B cell (primary cell): ENCODE measurements at regions of chr15 and their contacts with region 1.

Region 1: GRCh38 chr15:40440743-40441564 is at the start of gene BAHD1:
- DNase-seq: peak; percentile 94
- ATAC-seq: peak; percentile 90
- H3K4me3 ChIP-seq: peak within 1 kb of the TSS; percentile 15 to 80 (median 59)
- H3K4me3 Mint-ChIP-seq: peak within 1 kb of the TSS; percentile 91
- H3K27ac ChIP-seq: peak within 1 kb of the TSS in 1 of 2 donors; percentile 48
- H3K27ac Mint-ChIP-seq: peak within 1 kb of the TSS; percentile 89
- H3K4me1 ChIP-seq: peaks cover 37 to 44% of the 10 kb centered on the region in 2 donors
- H3K4me1 Mint-ChIP-seq: peaks cover 61% of the 10 kb centered on the region
- H3K27me3 ChIP-seq: peaks cover 0 to 35% (median 15%) of the 10 kb centered on the region in 4 experiments
- H3K27me3 Mint-ChIP-seq: peaks cover 25% of the 10 kb centered on the region
- CTCF ChIP-seq: no peak
- total RNA-seq, gene BAHD1: 34.7 and 34.8 TPM in 2 replicates

Region 2: DNA sequence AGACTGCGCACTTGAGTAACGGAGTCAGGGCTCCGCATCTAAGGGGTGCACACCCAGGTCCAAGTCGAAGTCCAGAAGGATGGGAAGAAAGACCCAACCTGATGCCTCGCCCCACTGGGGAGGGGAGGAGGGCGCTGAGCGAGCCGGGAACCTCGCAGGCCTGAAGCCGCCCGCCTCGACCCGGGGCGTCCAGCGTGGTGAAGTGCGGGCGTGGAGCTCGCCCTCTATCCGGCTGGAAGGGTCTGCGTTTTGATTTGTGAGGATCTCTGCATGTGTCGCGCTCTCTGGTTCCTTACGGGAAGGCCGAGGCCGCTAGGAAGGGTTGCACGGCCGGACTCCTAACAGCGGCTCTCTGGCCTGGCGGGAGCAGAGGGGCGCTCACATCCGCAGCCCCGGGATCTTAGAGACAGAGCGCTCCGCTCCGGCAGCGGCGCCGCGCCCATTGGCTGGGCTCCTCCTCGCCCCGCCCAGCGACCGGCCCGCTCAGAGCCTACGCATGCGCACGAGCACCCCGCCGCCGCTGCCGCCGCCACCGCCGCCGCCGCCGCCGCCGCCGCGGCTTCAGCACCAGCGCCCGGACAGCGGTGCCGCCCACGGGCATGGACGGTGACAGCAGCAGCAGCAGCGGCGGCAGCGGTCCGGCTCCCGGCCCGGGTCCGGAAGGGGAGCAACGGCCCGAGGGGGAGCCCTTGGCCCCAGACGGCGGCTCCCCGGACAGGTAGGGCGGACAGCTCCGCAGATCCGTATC is 83.1 kb before region 1 on chr15 and contains the start of gene DISP2:
- CTCF ChIA-PET with region 1: no interaction called
- POLR2A ChIA-PET with region 1: interaction called, 7 read pairs
- intact Hi-C with region 1: loop called (anchors 1 kb)
- DNase-seq: peak; percentile 95
- ATAC-seq: peak; percentile 93
- H3K4me3 ChIP-seq: peak within 1 kb of the TSS in 4 of 5 experiments; percentile 48 to 78 (median 58)
- H3K4me3 Mint-ChIP-seq: peak within 1 kb of the TSS; percentile 88
- H3K27ac ChIP-seq: no peak within 1 kb of the TSS
- H3K27ac Mint-ChIP-seq: peak within 1 kb of the TSS; percentile 59
- H3K4me1 ChIP-seq: peaks cover 6 to 11% of the 10 kb centered on the region in 2 donors
- H3K4me1 Mint-ChIP-seq: peaks cover 12% of the 10 kb centered on the region
- H3K27me3 ChIP-seq: peaks cover 0 to 6% (median 0%) of the 10 kb centered on the region in 4 experiments
- H3K27me3 Mint-ChIP-seq: peaks cover 8% of the 10 kb centered on the region
- CTCF ChIP-seq: no peak
- total RNA-seq, gene DISP2: 0.15 and 0.71 TPM in 2 replicates

Region 3: GRCh38 chr15:40382580-40383456 is 58.1 kb before region 1 on chr15 and contains the start of gene KNSTRN:
- CTCF ChIA-PET with region 1: no interaction called
- POLR2A ChIA-PET with region 1: no interaction called
- intact Hi-C with region 1: loop called (anchors 1 kb)
- DNase-seq: peak; percentile 93
- ATAC-seq: peak; percentile 100
- H3K4me3 ChIP-seq: peak within 1 kb of the TSS; percentile 53 to 89 (median 84)
- H3K4me3 Mint-ChIP-seq: peak within 1 kb of the TSS; percentile 98
- H3K27ac ChIP-seq: peak within 1 kb of the TSS in 1 of 2 donors; percentile 40
- H3K27ac Mint-ChIP-seq: peak within 1 kb of the TSS; percentile 82
- H3K4me1 ChIP-seq: peaks cover 6 to 13% of the 10 kb centered on the region in 2 donors
- H3K4me1 Mint-ChIP-seq: peaks cover 12% of the 10 kb centered on the region
- H3K27me3 ChIP-seq: no peaks in the 10 kb centered on the region
- H3K27me3 Mint-ChIP-seq: no peaks in the 10 kb centered on the region
- CTCF ChIP-seq: no peak
- total RNA-seq, gene KNSTRN: 12.6 and 14.0 TPM in 2 replicates

Region 4: GRCh38 chr15:40470423-40471104 is 29.6 kb after region 1 on chr15 and contains the start of gene CHST14:
- CTCF ChIA-PET with region 1: no interaction called
- POLR2A ChIA-PET with region 1: no interaction called
- intact Hi-C with region 1: loop called (anchors 1 kb)
- DNase-seq: peak; percentile 69
- ATAC-seq: peak; percentile 87
- H3K4me3 ChIP-seq: peak within 1 kb of the TSS; percentile 53 to 84 (median 79)
- H3K4me3 Mint-ChIP-seq: peak within 1 kb of the TSS; percentile 94
- H3K27ac ChIP-seq: peak within 1 kb of the TSS; percentile 73 to 76
- H3K27ac Mint-ChIP-seq: peak within 1 kb of the TSS; percentile 95
- H3K4me1 ChIP-seq: peaks cover 6 to 18% of the 10 kb centered on the region in 2 donors
- H3K4me1 Mint-ChIP-seq: peaks cover 15% of the 10 kb centered on the region
- H3K27me3 ChIP-seq: no peaks in the 10 kb centered on the region
- H3K27me3 Mint-ChIP-seq: no peaks in the 10 kb centered on the region
- CTCF ChIP-seq: no peak
- total RNA-seq, gene CHST14: 14.7 and 16.7 TPM in 2 replicates

Region 5: DNA sequence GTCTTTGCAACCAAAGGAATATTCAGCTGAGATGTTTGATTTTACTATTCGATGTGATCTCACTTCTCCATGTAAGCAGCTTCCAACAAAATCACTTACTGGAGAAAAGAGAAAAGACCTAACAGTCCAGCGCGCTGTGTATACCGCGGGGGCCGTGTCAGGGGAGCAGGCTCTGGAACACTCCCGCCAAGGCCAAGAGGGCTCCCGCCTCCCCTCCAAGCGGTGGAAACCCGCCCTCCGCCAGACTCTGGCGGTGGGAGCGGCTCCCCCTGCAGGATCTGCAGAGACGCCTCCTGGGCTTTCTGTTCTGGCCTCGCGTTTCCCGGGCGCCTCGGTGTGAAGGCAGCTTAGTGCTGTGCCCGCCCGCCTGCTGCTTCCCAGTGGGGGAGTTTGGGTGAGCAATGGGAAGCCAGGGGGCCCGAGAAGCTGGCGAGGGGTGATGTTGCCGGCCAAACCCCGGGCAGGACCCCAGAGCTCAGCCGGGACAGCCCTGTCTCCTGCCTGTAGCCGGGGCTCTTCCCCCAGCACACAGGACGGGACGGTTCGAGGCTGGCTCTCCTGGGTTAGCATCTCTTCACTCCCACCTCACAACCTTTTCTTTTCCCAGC is 66.1 kb after region 1 on chr15:
- CTCF ChIA-PET with region 1: interaction called, 4 read pairs
- POLR2A ChIA-PET with region 1: no interaction called
- intact Hi-C with region 1: loop called (anchors 5 kb)
- DNase-seq: peak; percentile 70
- ATAC-seq: peak; percentile 41
- H3K4me3 ChIP-seq: peak overlapping the region in 3 of 5 experiments; percentile 25 to 34 (median 34)
- H3K4me3 Mint-ChIP-seq: peak overlapping the region; percentile 44
- H3K27ac ChIP-seq: no peak overlapping the region
- H3K27ac Mint-ChIP-seq: no peak overlapping the region
- H3K4me1 ChIP-seq: peaks cover 24 to 25% of the 10 kb centered on the region in 2 donors
- H3K4me1 Mint-ChIP-seq: peaks cover 27% of the 10 kb centered on the region
- H3K27me3 ChIP-seq: peaks cover 0 to 20% (median 10%) of the 10 kb centered on the region in 4 experiments
- H3K27me3 Mint-ChIP-seq: peaks cover 39% of the 10 kb centered on the region
- CTCF ChIP-seq: peak; percentile 68

Region 6: GRCh38 chr15:40525855-40526254 is 84.9 kb after region 1 on chr15:
- CTCF ChIA-PET with region 1: no interaction called
- POLR2A ChIA-PET with region 1: no interaction called
- intact Hi-C with region 1: no loop called
- DNase-seq: no peak
- ATAC-seq: no peak
- H3K4me3 ChIP-seq: no peak overlapping the region
- H3K4me3 Mint-ChIP-seq: no peak overlapping the region
- H3K27ac ChIP-seq: no peak overlapping the region
- H3K27ac Mint-ChIP-seq: no peak overlapping the region
- H3K4me1 ChIP-seq: no peaks in the 10 kb centered on the region
- H3K4me1 Mint-ChIP-seq: peaks cover 2% of the 10 kb centered on the region
- H3K27me3 ChIP-seq: no peaks in the 10 kb centered on the region
- H3K27me3 Mint-ChIP-seq: no peaks in the 10 kb centered on the region
- CTCF ChIP-seq: no peak